ENCODE measurements at regions of chr11 and their contacts with region 1.

Region 1: DNA sequence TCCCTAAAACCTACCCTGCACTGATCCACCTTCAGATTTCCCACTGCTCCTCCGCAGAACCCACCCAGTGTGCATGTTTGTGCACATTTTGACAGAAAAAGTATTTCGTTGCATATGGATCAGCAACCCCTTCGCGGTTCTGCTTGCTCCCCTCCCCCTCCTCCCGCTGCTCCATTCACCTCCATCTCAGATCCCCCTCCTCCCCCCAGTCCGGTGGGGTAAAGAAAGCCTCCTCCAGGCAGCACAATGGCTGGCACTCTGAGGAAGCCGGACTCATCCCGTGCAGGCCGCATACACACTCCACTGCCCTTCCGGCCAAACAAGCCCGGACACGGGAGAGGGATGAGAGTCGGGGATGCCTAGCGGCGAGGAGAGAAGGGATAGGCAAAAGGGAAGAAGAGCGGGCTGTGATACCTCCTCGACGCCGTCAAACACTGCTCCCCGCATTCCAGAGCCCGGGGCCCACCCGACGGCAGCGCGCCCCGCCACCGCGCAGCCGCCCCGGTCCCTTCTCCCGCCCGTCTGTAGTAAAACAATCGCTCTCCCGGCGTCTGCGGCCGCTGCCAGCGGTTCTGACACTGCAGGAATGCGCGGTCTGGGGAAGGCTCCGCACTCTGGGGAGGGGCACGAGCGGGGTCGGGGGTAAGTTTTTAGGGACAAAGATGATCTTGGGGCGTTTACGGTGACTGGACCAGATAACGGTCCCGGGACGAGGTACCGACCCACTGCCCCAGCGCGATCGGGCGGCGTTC is 915 bp downstream of the FEZ1 start:
- DNase-seq: peak; percentile 46 to 93 (median 57)

Region 2: DNA sequence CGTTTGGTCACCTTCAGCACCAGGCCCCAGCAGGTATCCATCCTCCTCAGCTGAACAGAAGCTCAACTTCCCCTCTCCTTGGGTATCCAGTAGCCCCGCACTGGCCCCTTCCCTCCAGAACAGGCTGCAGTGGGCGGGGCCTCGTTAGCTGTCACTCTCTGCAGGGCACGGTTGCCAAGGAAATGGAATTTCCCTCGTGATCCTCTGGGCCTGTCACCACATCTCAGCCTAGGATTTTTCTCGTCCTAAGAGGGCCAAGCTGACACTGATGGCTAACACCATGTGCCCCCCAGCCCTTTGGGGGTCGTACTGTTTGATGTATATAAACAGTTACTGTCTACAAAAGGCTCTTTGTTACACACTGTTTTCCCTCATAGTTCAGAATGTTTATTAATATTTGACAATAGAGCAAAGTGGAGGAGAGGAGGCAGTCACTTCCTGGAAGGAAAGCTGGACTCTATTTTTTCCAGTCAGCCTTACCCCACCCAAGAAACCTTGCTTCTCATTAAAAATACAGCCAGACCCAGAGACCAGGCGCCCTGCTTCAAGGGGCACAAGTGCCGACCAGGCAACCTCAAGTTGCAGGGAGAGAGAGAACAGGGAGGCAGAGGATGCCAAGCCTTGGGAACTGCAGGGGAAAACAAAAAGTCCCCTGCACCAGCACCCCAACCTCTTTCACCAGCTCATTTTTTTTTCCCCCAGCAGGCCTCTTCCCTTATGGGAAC is 43.6 kb before region 1 on chr11:
- intact Hi-C with region 1: loop called (anchors 5 kb)
- DNase-seq: peak; percentile 80 to 98 (median 90)

Region 3: DNA sequence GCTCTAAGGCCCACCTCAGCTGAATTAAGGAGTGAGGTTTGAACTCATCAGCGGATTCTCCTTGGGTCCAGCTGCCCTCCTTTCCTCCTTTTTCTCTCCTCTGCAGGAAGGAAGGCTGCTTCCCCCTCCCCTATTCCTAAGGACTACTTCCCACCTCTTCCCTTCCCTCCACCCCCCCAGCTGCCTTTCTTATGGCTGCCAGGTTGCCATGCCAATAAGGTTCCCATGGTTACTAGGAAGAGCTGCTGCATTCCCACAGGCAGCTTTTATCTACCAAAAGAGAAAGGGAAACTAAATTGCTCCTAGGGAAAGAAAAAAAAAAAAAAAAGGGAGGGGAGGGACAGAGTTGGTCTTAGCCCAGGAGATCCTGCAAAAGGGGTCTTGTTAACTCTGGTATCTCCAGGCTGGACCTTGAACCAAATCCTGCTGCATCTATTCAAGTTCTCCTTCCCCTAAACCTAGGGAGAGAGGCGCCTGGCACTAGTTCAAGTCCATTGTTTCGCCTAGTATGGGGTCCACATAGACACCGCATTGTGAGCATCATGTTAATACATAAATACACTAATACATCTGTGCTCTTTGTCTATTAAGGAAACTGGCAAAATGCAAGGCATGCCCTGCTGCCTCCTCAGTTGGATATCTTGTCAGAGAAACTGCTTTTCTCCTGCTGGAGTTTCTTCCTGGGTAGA is 22.1 kb after region 1 on chr11:
- intact Hi-C with region 1: loop called (anchors 1 kb)
- DNase-seq: peak in 8 of 10 donors; percentile 34 to 89 (median 59)

Region 4: GRCh38 chr11:125568970-125569914 is 74.1 kb after region 1 on chr11 and contains the start of gene EI24:
- intact Hi-C with region 1: loop called (anchors 1 kb)
- DNase-seq: peak; percentile 80 to 99 (median 92)

Measured in posterior cingulate gyrus (tissue), 11 donors.